ENCODE measurements at regions of chr14 and their contacts with region 1.

Region 1: DNA sequence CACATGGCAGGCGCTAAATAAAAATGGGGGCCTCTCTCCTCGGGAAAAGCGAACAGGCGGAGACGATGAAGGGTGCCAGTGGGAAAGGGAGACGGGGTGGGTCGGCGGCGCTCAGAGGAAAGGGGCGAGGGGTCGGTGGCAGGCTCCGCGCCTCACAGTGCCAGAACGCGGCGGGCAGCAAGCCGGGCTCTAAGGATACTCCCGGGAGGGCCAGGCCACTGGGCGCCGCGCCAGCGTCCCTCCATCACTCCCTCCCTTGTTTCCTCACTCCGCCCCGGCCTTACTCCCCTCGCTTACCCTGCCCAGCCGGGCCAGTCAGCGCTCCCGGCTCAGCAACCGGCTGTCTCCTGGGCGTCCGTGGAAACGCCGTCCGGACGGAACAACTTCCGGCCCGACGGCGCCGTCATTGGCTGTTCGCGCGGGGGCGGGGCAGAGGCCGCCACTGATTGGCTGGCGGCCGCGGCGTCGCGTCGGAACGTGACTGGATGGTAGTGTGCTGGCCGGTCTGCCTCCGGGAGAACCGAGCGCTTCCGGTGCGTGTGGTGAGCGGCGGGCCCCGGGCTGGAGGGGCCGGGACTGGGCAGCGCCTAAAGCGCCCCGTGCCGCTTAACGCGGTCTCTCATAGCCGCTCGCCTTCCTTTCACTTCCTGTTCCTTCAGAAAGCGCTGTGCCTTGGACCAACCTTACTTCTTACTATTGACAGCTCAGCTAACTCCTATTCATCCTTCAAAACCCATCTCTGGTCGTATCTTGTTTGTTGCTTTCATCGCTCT is 53.0 kb downstream of the SLC25A47 start:
- DNase-seq: peak; percentile 93
- ATAC-seq: peak; percentile 66
- H3K4me3 Mint-ChIP-seq: peak within 1 kb of the TSS; percentile 98
- H3K27ac Mint-ChIP-seq: peak within 1 kb of the TSS; percentile 100
- H3K4me1 Mint-ChIP-seq: peaks cover 37% of the 10 kb centered on the region
- H3K27me3 Mint-ChIP-seq: no peaks in the 10 kb centered on the region
- CTCF ChIP-seq: no peak

Region 2: DNA sequence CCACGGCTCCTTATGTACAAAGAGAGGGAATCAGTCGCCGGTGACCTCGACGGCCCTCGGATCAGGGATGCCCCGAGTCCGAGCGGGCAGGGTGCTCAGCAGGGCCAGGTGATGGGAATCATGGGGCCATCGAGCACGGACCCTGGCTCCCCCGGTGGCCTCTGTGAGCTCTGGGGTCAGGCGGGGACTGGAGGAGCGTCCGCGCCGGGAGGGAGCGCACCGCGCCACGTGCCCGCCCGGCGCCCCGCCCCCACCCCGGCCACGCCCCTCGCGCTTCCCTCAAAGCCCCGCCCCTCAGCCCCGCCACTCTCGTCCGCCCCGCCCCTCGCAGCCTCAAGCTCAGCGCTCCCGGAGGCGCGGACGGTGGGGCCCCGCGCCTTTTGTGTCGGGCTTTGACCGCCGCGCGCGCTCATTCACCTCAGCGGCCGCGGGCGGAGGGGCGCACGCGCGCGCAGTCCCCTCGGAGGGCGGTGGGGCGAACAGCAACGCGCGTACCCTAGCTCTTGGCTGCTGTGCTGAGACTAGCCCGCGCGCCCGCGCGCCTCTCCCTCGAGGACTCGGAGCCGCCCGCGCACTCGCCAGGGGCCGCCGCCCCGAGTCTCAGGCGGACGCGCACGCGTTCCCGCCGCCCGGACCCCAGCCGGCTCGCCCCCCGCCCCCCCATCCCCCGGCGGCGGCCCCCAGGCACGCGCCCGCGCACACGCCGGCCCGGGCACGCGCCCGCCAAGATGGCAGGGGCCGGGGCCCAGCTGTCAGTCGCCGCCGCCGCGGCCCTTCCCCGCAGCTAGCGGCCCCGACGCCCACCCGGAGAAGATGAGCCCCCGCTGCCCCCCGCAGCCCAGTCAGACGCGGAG is 404.8 kb before region 1 on chr14:
- CTCF ChIA-PET with region 1: no interaction called
- POLR2A ChIA-PET with region 1: no interaction called
- intact Hi-C with region 1: loop called (anchors 10 kb)
- DNase-seq: peak; percentile 87
- ATAC-seq: peak; percentile 90
- H3K4me3 Mint-ChIP-seq: peak overlapping the region; percentile 61
- H3K27ac Mint-ChIP-seq: no peak overlapping the region
- H3K4me1 Mint-ChIP-seq: peaks cover 12% of the 10 kb centered on the region
- H3K27me3 Mint-ChIP-seq: peaks cover 21% of the 10 kb centered on the region
- CTCF ChIP-seq: no peak

Region 3: DNA sequence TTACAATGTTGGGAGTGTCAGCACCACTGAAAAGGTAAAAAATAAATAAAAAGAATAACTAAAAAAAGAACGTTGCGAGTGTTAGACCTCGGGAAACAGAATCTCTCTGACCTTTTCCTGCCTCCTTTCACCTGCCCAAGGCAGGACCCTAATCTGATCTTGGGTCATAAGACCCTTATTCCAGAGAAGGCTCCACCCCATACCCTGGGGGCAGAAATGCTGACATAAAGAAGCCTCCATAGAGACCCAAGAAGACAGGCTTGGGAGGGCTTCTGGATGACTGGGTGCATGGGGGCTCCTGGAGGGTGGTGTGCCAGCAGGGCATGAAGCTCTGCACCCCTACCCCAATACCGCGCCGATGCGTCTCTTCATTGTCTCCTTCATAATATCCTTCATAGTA is 170.0 kb before region 1 on chr14:
- CTCF ChIA-PET with region 1: no interaction called
- POLR2A ChIA-PET with region 1: no interaction called
- intact Hi-C with region 1: no loop called
- DNase-seq: no peak
- ATAC-seq: no peak
- H3K4me3 Mint-ChIP-seq: no peak overlapping the region
- H3K27ac Mint-ChIP-seq: no peak overlapping the region
- H3K4me1 Mint-ChIP-seq: no peaks in the 10 kb centered on the region
- H3K27me3 Mint-ChIP-seq: no peaks in the 10 kb centered on the region
- CTCF ChIP-seq: no peak

Region 4: DNA sequence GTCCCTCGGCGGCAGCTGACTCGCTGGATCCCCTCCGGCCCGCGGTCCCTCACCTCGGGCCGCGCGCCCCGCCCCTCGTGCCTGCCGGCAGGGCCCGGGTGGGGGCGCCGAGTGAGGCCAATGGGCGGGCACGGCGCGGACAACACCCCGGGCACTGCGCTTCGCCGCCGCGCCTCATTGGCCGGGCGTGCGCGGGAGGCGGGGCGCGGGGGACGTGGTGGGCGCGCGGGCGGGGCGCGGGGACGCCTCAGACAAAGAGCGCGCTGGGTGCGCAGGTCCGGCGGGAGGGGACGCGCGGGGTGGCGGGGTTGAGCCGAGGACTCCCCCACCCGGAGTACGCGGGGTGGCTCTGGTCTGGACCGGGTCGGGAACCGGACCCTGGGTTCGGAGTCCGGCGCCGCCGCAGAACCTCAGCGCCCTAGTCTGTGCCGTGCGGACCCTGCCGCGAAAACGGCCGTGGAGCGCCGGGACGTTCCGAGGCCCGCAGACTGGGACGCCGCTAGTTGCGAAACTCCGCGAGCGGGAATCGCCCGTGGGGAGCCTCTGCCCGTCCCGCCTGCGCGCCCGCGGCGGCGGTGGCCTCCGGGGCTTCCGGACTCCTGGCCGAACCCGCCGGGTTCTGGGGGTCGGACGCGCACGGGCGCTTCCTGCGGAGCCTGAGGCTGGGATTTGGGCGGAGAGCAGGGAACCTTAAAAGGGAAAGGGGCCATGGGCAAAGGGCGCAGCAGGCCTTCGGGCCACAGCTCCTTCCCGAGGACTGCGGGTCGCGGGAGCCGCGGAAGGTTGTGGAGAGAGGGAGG is 69.5 kb before region 1 on chr14 and contains the start of gene SLC25A29:
- CTCF ChIA-PET with region 1: interaction called, 8 read pairs
- POLR2A ChIA-PET with region 1: interaction called, 7 read pairs
- intact Hi-C with region 1: loop called (anchors 10 kb)
- DNase-seq: peak; percentile 81
- ATAC-seq: peak; percentile 91
- H3K4me3 Mint-ChIP-seq: peak within 1 kb of the TSS; percentile 78
- H3K27ac Mint-ChIP-seq: peak within 1 kb of the TSS; percentile 68
- H3K4me1 Mint-ChIP-seq: peaks cover 12% of the 10 kb centered on the region
- H3K27me3 Mint-ChIP-seq: peaks cover 2% of the 10 kb centered on the region
- CTCF ChIP-seq: no peak
- total RNA-seq, gene SLC25A29: 23.6 to 24.7 TPM

Region 5: DNA sequence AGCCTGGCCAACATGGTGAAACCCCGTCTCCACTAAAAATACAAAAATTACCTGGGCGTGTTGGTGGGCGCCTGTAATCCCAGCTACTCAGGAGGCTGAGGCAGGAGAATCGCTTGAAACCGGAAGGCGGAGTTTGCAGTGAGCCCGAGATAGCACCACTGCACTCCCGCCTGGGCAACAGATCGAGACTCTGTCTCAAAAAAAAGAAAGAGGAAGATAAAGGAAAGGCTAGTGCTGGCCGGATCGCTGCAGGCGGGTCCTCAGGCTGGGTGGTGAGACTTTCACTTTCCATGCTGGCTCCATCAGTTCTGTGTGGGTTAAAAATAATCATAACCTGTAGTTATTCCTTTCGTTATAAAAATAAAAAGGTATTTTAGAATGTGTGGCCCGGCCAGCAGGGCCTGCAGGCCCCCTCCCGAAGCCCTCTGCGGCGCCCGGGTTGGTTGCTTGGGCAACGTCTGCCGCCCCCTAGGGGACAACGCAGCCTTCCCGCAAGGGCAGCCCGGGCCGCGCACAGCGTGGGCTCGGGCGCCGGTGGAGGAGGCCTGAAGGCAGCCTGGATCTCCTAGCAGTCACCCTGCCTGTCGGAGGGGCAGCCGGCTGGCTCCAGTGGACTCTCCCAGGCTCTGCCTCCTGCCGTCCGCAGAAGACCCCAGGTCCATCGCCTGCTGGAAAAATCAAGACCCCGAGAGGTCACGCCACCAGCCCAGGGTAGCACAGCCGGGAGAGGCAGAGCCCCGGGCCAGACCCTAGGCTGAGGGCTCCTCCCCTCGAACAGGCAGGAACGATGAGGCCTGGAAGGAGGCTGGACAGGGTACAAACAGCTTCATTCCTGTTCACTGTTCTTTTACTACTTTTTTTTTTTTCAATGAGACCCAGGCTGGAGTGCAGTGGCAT is 58.0 kb before region 1 on chr14:
- CTCF ChIA-PET with region 1: no interaction called
- POLR2A ChIA-PET with region 1: no interaction called
- intact Hi-C with region 1: no loop called
- DNase-seq: peak; percentile 84
- ATAC-seq: peak; percentile 96
- H3K4me3 Mint-ChIP-seq: peak overlapping the region; percentile 52
- H3K27ac Mint-ChIP-seq: no peak overlapping the region
- H3K4me1 Mint-ChIP-seq: peaks cover 6% of the 10 kb centered on the region
- H3K27me3 Mint-ChIP-seq: no peaks in the 10 kb centered on the region
- CTCF ChIP-seq: peak; percentile 95

Region 6: GRCh38 chr14:100362311-100362927 is 13.7 kb before region 1 on chr14:
- CTCF ChIA-PET with region 1: interaction called, 5 read pairs
- POLR2A ChIA-PET with region 1: interaction called, 59 read pairs
- intact Hi-C with region 1: no loop called
- DNase-seq: no peak
- ATAC-seq: no peak
- H3K4me3 Mint-ChIP-seq: no peak overlapping the region
- H3K27ac Mint-ChIP-seq: peak overlapping the region; percentile 8
- H3K4me1 Mint-ChIP-seq: peaks cover 40% of the 10 kb centered on the region
- H3K27me3 Mint-ChIP-seq: no peaks in the 10 kb centered on the region
- CTCF ChIP-seq: no peak

Region 7: DNA sequence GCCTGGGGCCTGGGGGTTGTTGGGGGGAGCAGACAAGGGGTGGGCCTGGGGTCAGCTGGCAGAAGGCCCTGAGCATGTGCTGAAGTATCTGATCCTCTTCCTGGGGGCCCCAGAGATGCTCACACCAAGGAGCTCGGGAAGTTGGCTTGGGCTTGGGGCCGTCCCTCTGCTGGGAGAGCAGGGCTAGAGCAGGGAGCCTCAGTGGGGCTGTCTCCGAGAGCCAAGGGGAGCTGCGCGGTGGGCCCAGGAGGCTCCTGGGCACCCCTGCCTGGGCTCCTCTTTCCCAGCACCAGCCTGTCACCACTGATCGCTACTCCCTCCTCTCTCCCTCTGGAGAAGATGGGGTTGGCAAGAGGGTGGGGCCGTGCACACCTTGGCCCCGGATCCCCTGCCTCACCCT is 182.8 kb after region 1 on chr14:
- CTCF ChIA-PET with region 1: no interaction called
- POLR2A ChIA-PET with region 1: no interaction called
- intact Hi-C with region 1: no loop called
- DNase-seq: no peak
- ATAC-seq: no peak
- H3K4me3 Mint-ChIP-seq: no peak overlapping the region
- H3K27ac Mint-ChIP-seq: no peak overlapping the region
- H3K4me1 Mint-ChIP-seq: peaks cover 6% of the 10 kb centered on the region
- H3K27me3 Mint-ChIP-seq: peaks cover 1% of the 10 kb centered on the region
- CTCF ChIP-seq: no peak

Measured in activated CD8-positive, alpha-beta T cell treated with anti-CD3 and anti-CD28 coated beads for 36 hours (primary cell).